ENCODE measurements at regions of chr11 and their contacts with region 1.

Region 1: DNA sequence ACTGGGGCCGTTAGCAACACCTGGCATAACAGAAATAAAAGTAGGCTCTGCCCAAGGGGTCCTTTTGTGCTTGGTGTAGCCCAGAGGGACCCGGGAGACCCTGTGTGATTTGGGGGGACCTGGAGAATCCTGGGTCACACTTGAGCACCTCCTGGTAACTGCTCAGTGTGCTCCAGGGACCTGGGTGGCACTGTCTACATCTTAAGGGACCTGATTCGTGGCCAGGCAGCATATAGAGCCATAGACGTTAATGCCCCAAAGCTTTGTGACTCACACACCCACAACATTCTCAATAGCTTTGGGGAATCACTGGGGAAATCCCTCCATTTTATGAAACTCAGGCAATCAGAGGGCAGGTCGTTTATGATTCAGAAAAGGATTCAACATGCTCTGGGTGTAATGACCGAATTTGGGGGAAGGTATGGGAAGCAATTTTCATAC is 3.6 kb upstream of the IGF2 start:
- DNase-seq: no peak
- H3K4me3 Mint-ChIP-seq: peak overlapping the region; percentile 42
- H3K27ac Mint-ChIP-seq: peak overlapping the region; percentile 82
- H3K4me1 Mint-ChIP-seq: peaks cover 14% of the 10 kb centered on the region
- H3K27me3 Mint-ChIP-seq: peaks cover 56% of the 10 kb centered on the region

Region 2: DNA sequence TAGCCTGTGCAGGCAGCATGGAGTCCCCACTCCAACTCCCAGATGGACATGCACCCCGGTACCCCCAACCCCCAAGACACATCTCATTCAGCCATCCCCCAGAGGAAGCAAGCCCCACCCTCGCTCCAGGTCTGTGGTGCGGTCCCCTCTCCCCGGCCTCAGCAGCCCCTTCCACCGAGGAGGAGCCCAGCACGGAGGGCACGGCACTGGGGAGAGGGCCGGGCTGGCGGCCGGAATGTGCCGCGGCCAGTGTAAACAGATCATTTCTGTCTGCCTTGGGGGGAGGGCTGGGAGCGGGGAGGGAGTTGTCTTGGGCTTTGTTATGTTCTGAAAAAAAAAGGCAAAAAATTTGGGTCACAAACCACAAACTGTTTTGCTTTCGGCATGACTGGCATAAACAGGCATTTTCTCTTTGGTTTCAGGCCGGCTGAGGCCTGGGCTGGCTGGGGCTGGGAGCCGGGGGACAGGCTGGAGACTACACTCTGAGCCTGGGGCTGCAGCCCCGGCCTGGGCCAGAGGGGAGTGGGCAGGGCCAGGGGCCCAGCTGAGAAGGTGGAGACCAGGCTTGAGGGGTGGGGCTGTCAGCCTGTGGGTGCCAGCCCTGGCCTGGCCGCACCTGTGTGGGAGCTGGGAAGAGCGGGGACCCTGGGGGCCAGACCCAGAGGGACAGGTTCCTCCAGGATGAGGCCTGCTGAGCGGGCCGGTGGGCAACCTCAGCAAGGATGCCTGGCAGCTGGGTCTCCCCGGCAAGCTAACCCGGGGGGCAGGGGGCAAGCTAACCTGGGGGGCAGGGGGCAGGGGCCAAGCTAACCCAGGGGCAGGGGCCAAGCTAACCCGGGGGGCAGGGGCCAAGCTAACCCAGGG is 20.3 kb before region 1 on chr11:
- intact Hi-C with region 1: no loop called
- DNase-seq: no peak
- H3K4me3 Mint-ChIP-seq: no peak overlapping the region
- H3K27ac Mint-ChIP-seq: no peak overlapping the region
- H3K4me1 Mint-ChIP-seq: no peaks in the 10 kb centered on the region
- H3K27me3 Mint-ChIP-seq: peaks cover 14% of the 10 kb centered on the region

Region 3: GRCh38 chr11:2211113-2211971 is 68.6 kb after region 1 on chr11:
- intact Hi-C with region 1: no loop called
- DNase-seq: no peak
- H3K4me3 Mint-ChIP-seq: no peak overlapping the region
- H3K27ac Mint-ChIP-seq: no peak overlapping the region
- H3K4me1 Mint-ChIP-seq: peaks cover 3% of the 10 kb centered on the region
- H3K27me3 Mint-ChIP-seq: no peaks in the 10 kb centered on the region

Region 4: GRCh38 chr11:2269601-2270321 is 127.0 kb after region 1 on chr11:
- intact Hi-C with region 1: loop called (anchors 2 kb)
- DNase-seq: peak; percentile 39
- H3K4me3 Mint-ChIP-seq: no peak overlapping the region
- H3K27ac Mint-ChIP-seq: no peak overlapping the region
- H3K4me1 Mint-ChIP-seq: peaks cover 15% of the 10 kb centered on the region
- H3K27me3 Mint-ChIP-seq: peaks cover 22% of the 10 kb centered on the region